Breast epithelium (tissue), 4 donors: ENCODE measurements at regions of chr15 and their contacts with region 1.

Region 1: GRCh38 chr15:72345806-72346205 is 25.8 kb upstream of the CELF6 start:
- DNase-seq: no peak
- H3K4me3 ChIP-seq: no peak overlapping the region
- H3K27ac ChIP-seq: no peak overlapping the region
- H3K4me1 ChIP-seq: no peaks in the 10 kb centered on the region
- H3K27me3 ChIP-seq: no peaks in the 10 kb centered on the region
- CTCF ChIP-seq: no peak
- POLR2A ChIP-seq: no peak

Region 2: DNA sequence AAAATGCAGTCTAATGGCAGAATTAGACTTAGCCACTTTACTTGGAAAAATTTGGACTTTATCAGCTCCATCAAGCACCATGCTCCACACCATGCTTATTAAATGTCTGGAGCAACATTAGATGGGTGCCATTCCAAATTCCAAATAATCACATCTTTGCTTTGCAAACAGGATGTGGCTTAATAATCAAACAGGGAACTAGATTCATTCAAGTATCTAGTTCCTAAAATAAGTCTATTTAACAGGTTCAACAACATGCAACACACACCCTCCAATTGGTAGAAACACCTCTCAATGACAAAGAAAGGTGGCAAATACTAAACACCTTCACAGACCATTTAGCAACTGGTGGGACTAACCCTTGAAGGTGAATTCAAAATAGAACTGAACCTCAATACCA is 26.6 kb after region 1 on chr15:
- intact Hi-C with region 1: loop called (anchors 2 kb)
- DNase-seq: no peak
- H3K4me3 ChIP-seq: no peak overlapping the region
- H3K27ac ChIP-seq: peak overlapping the region in 1 of 2 donors; percentile 6
- H3K4me1 ChIP-seq: peaks cover 0 to 7% of the 10 kb centered on the region in 2 donors
- H3K27me3 ChIP-seq: no peaks in the 10 kb centered on the region
- CTCF ChIP-seq: no peak
- POLR2A ChIP-seq: no peak